ENCODE measurements at regions of chr7 and their contacts with region 1.

Region 1: DNA sequence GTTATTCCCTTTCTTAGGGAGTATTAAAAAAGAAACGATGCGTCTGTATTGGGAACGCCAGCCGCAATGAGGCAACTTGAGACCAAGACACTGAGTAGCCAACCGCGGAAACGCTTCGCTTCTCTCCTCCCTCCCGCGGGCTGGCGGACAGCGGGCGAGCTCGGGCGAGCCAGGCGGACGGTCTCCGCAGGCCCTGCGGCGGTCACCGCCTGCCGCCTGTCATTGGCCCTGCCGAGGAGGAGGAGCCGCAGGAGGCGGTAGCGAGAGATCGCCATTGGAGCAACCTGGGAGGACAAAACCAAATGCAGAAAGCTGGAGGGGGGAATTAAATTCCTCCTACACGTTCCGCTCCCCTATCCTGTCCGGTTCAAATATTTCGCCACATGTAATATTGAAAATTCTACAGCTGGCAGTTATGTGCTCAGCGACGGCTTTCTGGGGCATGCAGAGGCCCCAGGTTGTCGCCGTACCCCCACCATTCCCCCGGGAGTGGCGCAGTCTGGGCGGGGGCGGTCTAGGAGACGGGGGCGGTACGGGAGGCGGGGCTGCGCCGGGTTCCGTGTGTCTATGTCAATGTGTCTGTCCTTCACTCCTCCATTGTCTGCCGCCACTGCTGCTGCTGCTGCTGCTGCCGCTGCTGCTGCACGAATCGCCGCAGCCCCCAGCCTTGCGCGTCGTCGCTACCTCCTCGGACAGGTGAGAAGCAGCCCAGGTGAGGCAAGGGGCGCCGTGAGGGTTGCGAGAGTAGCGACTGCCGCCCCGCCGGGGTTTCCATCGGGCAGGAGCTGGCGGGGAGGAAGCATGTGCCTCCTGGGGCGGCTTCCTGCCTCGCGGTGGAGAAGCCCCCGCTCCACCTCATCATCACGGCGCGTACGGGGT is at the starts of genes ANKMY2 and BZW2:
- DNase-seq: peak; percentile 85 to 89
- H3K4me3 ChIP-seq: peak within 1 kb of the TSS; percentile 86 to 97 (median 92)
- H3K27ac ChIP-seq: peak within 1 kb of the TSS; percentile 98
- H3K4me1 ChIP-seq: peaks cover 3 to 15% (median 6%) of the 10 kb centered on the region in 4 experiments; a peak in 4 of 7 replicates
- H3K27me3 ChIP-seq: no peaks in the 10 kb centered on the region
- CTCF ChIP-seq: no peak
- EP300 ChIP-seq: peak in 1 of 2 experiments; percentile 100; a peak in 2 of 3 replicates
- POLR2A ChIP-seq: peak; percentile 94 to 95
- RAD21 ChIP-seq: no peak
- total RNA-seq, gene ANKMY2: 9.3 and 9.6 TPM in 2 replicates
- total RNA-seq, gene BZW2: 98.4 and 103 TPM in 2 replicates

Region 2: GRCh38 chr7:16657656-16658279 is 11.9 kb after region 1 on chr7:
- CTCF ChIA-PET with region 1: interaction called, 4 read pairs
- POLR2A ChIA-PET with region 1: interaction called, 52 read pairs
- DNase-seq: no peak
- H3K4me3 ChIP-seq: peak overlapping the region in 1 of 4 experiments; percentile 33; a peak in 2 of 8 replicates
- H3K27ac ChIP-seq: no peak overlapping the region
- H3K4me1 ChIP-seq: peaks cover 0 to 5% (median 2%) of the 10 kb centered on the region in 4 experiments; a peak in 2 of 7 replicates
- H3K27me3 ChIP-seq: no peaks in the 10 kb centered on the region
- CTCF ChIP-seq: no peak
- EP300 ChIP-seq: no peak
- POLR2A ChIP-seq: no peak
- RAD21 ChIP-seq: no peak

Region 3: GRCh38 chr7:16668049-16668858 is 22.4 kb after region 1 on chr7:
- CTCF ChIA-PET with region 1: interaction called, 4 read pairs
- POLR2A ChIA-PET with region 1: interaction called, 10 read pairs
- DNase-seq: no peak
- H3K4me3 ChIP-seq: no peak overlapping the region
- H3K27ac ChIP-seq: no peak overlapping the region
- H3K4me1 ChIP-seq: peaks cover 0 to 13% (median 5%) of the 10 kb centered on the region in 4 experiments; a peak in 4 of 7 replicates
- H3K27me3 ChIP-seq: no peaks in the 10 kb centered on the region
- CTCF ChIP-seq: no peak
- EP300 ChIP-seq: no peak
- POLR2A ChIP-seq: no peak
- RAD21 ChIP-seq: no peak